ENCODE measurements at regions of chr20 and their contacts with region 1.

Region 1: DNA sequence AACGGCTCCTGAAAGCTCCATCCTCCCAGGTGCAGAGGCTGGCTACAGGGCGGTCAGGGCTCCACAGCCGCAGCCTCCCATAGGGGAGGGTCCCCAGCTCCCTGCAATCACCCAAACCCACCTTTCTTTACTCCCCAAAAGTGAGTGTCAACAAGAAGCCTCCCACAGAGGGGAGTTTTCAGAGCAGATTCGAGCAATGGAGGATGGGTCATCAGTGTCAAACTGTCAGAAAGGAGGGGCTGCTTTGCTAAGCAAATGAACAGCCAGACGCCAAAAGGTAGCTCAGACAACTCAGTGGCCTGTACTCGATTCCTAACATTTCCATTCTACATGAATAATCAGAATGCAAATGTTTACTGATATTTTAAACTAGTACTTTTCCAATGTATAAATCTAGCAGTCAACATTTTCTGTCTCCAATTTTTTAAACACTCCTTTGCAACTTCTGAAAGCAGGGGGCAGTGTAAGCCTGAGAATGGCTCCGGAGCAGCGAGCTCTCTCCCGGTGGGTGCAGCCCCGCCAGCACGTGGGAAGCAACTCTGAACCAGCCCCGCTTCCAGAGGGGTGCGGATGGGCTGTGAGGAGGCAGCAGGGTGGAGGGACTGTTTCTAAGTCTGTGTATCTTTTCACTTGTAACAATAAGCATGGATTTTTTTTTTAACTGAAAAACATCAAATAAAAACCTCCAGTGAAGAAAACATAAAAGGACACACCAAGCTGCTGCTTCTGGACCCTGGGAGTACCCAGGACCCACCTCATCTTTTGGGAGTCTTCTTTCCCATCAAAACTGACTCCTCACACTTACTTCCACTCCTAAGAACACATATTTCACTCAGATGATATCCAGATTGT is 54.9 kb downstream of the TAF4 start:
- DNase-seq: peak; percentile 86
- CTCF ChIP-seq: peak; percentile 49

Region 2: DNA sequence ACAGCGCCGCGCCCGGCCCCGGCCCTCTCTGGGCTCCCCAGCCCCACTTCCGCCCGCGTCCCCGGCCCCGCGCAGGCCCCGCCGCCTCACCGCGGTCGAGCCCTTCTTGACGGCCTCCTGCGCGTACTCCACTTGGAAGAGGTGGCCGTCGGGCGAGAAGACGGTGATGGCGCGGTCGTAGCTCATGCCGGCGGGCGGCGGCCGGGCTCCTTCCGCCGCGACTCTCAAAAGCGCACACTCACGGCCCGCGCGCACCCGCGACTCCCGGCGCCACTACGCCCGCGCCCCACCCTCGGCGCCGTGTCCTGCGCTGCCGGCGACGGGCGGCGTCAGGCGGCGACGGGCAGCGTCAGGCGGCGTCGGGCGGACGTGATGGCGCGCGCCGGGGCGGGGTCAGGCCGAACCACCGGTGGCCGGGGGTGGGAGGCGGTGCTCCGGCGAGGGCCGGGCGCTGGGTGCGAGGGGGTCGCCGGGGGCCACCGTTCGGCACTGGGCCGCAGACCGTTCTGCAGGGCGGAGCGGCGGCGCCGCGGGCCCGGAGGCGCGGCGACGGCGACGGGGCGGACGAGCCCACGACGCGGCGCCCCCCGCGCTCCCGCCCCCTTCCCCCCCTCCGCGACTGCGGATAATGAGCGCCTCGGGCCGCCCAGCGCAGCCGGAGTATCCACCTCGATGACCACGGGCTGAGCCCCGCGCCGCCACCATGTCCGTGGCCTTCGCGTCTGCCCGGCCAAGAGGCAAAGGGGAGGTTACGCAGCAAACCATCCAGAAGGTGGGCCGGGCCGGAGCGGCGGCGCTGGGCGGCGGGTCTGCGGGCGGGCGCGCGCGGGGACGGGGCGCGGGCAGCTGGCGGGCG is 132.6 kb after region 1 on chr20 and contains the starts of genes PSMA7 and SS18L1:
- in situ Hi-C with region 1: loop called (anchors 10 kb)
- DNase-seq: peak; percentile 95
- CTCF ChIP-seq: no peak

Region 3: GRCh38 chr20:62156592-62157386 is 146.0 kb after region 1 on chr20:
- in situ Hi-C with region 1: no loop called
- DNase-seq: peak; percentile 89
- CTCF ChIP-seq: peak; percentile 74